MCF 10A (cell line): ENCODE measurements at regions of chr12 and their contacts with region 1.

Region 1: GRCh38 chr12:77010691-77011548 is 54.4 kb downstream of the E2F7 start:
- DNase-seq: peak; percentile 79
- H3K4me3 Mint-ChIP-seq: no peak overlapping the region
- H3K27ac Mint-ChIP-seq: no peak overlapping the region
- H3K4me1 Mint-ChIP-seq: peaks cover 4% of the 10 kb centered on the region
- H3K27me3 Mint-ChIP-seq: no peaks in the 10 kb centered on the region
- CTCF ChIP-seq: peak; percentile 86

Region 2: GRCh38 chr12:76763743-76764675 is 246.9 kb before region 1 on chr12 and contains the start of gene ZDHHC17:
- CTCF ChIA-PET with region 1: interaction called, 12 read pairs
- POLR2A ChIA-PET with region 1: no interaction called
- intact Hi-C with region 1: no loop called
- DNase-seq: peak; percentile 90
- H3K4me3 Mint-ChIP-seq: peak within 1 kb of the TSS; percentile 95
- H3K27ac Mint-ChIP-seq: peak within 1 kb of the TSS; percentile 94
- H3K4me1 Mint-ChIP-seq: peaks cover 14% of the 10 kb centered on the region
- H3K27me3 Mint-ChIP-seq: no peaks in the 10 kb centered on the region
- CTCF ChIP-seq: no peak
- total RNA-seq, gene ZDHHC17: 26.9 and 28.3 TPM in 2 replicates

Region 3: GRCh38 chr12:76820888-76821482 is 189.9 kb before region 1 on chr12:
- CTCF ChIA-PET with region 1: interaction called, 14 read pairs
- POLR2A ChIA-PET with region 1: interaction called, 5 read pairs
- intact Hi-C with region 1: loop called (anchors 10 kb)
- DNase-seq: peak; percentile 60
- H3K4me3 Mint-ChIP-seq: no peak overlapping the region
- H3K27ac Mint-ChIP-seq: no peak overlapping the region
- H3K4me1 Mint-ChIP-seq: no peaks in the 10 kb centered on the region
- H3K27me3 Mint-ChIP-seq: no peaks in the 10 kb centered on the region
- CTCF ChIP-seq: peak; percentile 50

Region 4: GRCh38 chr12:76942267-76942666 is 68.7 kb before region 1 on chr12:
- CTCF ChIA-PET with region 1: interaction called, 16 read pairs
- POLR2A ChIA-PET with region 1: no interaction called
- intact Hi-C with region 1: no loop called
- DNase-seq: no peak
- H3K4me3 Mint-ChIP-seq: no peak overlapping the region
- H3K27ac Mint-ChIP-seq: no peak overlapping the region
- H3K4me1 Mint-ChIP-seq: peaks cover 10% of the 10 kb centered on the region
- H3K27me3 Mint-ChIP-seq: no peaks in the 10 kb centered on the region
- CTCF ChIP-seq: no peak

Region 5: DNA sequence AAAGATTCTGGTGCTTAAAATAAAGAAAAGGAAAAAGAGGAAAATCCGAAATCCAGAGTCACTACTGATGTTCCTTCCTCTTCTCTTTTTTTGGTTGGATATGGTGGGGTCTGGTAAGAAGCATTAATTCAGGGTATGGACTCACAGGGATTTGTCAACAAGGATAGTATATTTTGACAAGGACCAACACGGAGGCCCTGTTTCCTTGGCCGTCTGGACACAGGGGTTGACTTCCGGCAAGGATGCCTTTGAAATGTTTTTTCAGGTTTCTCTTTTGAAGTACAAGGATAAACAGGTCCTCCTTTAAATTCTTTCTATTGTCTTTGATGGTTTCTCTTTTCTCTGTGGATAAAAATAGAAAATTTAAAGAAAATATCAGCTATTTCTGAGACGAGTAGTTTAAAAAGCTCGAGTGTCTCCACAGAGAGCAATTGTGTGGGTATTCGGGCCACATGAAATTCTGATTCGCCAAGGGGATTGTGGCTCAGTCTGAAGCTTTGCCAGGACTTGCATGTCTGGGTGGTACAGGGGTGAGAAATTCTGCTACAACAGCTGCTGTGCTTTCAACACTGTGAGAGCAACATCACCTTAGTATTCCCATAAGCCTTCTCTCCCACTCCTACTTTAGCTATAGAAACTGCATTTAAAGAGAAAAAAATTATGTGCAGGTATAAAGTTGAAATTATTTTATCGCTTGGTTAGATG is 43.6 kb before region 1 on chr12:
- CTCF ChIA-PET with region 1: interaction called, 34 read pairs
- POLR2A ChIA-PET with region 1: interaction called, 5 read pairs
- intact Hi-C with region 1: no loop called
- DNase-seq: no peak
- H3K4me3 Mint-ChIP-seq: no peak overlapping the region
- H3K27ac Mint-ChIP-seq: no peak overlapping the region
- H3K4me1 Mint-ChIP-seq: peaks cover under 1% of the 10 kb centered on the region
- H3K27me3 Mint-ChIP-seq: no peaks in the 10 kb centered on the region
- CTCF ChIP-seq: no peak

Region 6: DNA sequence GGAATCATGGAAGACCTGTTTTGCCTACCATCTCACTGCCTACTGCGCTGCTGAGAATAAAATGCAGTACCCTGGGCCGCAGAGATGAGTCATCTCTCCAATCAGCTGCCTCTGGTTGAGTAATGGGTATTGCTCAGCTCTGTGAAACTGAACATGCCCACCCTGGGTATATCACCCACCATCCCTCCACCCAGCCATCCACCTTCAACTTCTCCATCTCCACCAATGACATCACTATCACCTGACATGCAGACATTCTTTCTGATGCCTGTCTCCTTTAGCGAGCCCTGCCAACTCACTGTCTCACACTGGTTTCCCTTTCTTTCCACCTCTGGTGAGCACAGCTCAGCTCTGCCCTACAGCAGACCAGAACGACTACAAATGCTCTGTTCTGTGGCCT is 20.8 kb after region 1 on chr12:
- CTCF ChIA-PET with region 1: interaction called, 10 read pairs
- POLR2A ChIA-PET with region 1: interaction called, 3 read pairs
- intact Hi-C with region 1: no loop called
- DNase-seq: peak; percentile 58
- H3K4me3 Mint-ChIP-seq: no peak overlapping the region
- H3K27ac Mint-ChIP-seq: peak overlapping the region; percentile 63
- H3K4me1 Mint-ChIP-seq: peaks cover 13% of the 10 kb centered on the region
- H3K27me3 Mint-ChIP-seq: no peaks in the 10 kb centered on the region
- CTCF ChIP-seq: no peak